ENCODE measurements at regions of chr1 and their contacts with region 1.

Region 1: GRCh38 chr1:147591261-147591891 is 50.1 kb downstream of the BCL9 start:
- DNase-seq: no peak
- H3K4me3 Mint-ChIP-seq: no peak overlapping the region
- H3K27ac Mint-ChIP-seq: peak overlapping the region; percentile 5
- H3K4me1 Mint-ChIP-seq: peaks cover 11% of the 10 kb centered on the region
- H3K27me3 Mint-ChIP-seq: no peaks in the 10 kb centered on the region
- CTCF ChIP-seq: no peak

Region 2: DNA sequence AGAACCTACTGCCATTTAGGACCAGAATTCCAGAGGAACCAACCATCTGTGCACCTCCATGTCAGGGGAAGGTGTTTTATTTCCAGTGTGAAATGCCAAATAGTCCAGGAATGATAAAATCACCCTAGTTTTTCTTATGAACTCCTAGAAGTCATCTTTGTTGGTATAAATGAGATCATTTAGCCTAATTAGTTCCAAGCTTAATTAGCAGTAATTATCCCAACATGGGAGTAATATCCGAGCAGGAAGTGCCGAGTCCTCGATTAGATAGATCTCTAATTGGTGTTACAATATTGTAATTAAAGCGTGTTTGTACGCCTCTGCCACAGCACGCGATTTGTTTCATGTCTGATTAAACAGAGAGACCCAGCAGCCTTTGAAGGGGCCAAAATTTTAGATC is 17.0 kb before region 1 on chr1:
- CTCF ChIA-PET with region 1: no interaction called
- intact Hi-C with region 1: loop called (anchors 2 kb)
- DNase-seq: no peak
- H3K4me3 Mint-ChIP-seq: no peak overlapping the region
- H3K27ac Mint-ChIP-seq: no peak overlapping the region
- H3K4me1 Mint-ChIP-seq: peaks cover 5% of the 10 kb centered on the region
- H3K27me3 Mint-ChIP-seq: no peaks in the 10 kb centered on the region
- CTCF ChIP-seq: no peak

Measured in Calu3 (cell line).